ENCODE measurements at regions of chr17 and their contacts with region 1.

Region 1: GRCh38 chr17:58303971-58304725 is 23.4 kb upstream of the MPO start:
- DNase-seq: peak; percentile 70
- H3K4me3 Mint-ChIP-seq: no peak overlapping the region
- H3K27ac Mint-ChIP-seq: no peak overlapping the region
- H3K4me1 Mint-ChIP-seq: no peaks in the 10 kb centered on the region
- H3K27me3 Mint-ChIP-seq: no peaks in the 10 kb centered on the region

Region 2: DNA sequence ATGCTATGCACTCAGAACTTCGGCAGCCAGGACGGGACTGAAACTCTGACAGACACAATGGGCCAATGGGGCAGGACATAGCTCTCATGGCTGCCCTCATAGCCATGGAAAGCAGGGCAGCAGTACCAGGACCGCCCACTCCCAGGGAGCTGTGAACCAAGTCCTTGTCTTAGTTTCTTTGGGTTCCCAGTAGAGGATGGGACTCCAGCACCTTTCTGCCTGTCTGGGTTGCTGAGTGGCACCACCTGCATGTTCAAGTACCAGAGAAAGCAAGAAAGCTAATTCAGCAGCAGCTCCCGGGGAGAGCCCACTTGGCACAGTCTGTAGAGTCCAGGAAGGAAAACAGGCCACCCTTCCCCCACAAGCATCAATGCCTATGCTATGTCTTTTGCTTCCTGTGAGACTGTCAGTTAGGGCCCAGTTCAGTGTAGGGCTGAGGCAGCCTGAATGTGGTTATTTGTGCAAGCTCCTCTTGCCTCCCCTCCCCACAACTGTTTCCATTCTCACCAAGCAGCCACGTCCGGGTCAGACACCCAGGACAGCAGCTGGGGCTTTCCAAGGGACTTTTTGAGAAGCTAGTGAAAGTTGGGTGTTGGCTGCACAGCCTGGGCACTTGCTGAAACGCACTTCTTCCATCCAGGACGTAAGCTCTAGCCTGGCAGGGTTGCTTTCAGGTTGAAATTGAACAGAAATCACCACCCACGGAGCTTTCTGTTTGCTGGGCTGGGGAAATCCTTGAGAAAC is 40.1 kb after region 1 on chr17:
- CTCF ChIA-PET with region 1: interaction called, 11 read pairs
- intact Hi-C with region 1: loop called (anchors 1 kb)
- DNase-seq: peak; percentile 98
- H3K4me3 Mint-ChIP-seq: peak overlapping the region; percentile 92
- H3K27ac Mint-ChIP-seq: peak overlapping the region; percentile 99
- H3K4me1 Mint-ChIP-seq: peaks cover 60% of the 10 kb centered on the region
- H3K27me3 Mint-ChIP-seq: no peaks in the 10 kb centered on the region

Region 3: DNA sequence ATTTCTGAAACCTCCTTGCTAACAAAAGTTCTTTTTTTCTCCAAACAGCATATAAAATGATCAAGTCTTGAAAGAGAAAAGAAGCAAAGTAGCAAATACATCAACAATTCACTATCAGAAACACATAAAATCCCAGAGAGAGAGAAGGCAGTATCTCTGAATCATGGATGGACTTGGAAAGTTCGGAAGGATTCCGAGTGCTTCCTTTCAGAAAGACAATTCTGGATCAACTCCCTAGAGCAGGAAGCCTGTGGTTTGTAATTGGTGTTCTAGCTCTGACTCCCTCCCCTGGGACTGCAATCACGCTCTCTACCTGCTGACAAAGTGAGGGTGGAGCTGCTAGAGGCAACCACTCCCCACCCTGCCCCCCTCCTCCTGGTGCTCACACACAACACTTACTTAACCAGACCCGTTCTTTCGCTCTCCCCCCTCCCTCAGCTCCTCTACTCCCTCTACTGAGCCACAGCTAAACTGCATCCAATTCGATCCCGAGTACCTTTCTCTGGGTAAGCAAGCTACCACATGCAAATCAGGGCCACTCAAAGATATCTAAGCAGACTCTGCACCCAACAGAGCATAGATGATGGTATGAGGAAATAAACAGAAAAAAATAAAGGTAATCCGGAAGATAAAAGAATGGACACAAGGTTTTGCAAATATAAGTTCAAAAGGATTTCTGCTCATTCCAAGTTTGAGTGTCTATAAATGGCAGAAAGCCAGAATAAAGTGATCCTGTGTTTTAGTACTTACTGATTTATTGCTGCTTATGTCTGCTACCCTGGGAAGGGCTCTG is 113.3 kb after region 1 on chr17 and contains the start of gene RNF43:
- CTCF ChIA-PET with region 1: interaction called, 22 read pairs
- intact Hi-C with region 1: no loop called
- DNase-seq: peak; percentile 95
- H3K4me3 Mint-ChIP-seq: peak within 1 kb of the TSS; percentile 41
- H3K27ac Mint-ChIP-seq: peak within 1 kb of the TSS; percentile 18
- H3K4me1 Mint-ChIP-seq: peaks cover 18% of the 10 kb centered on the region
- H3K27me3 Mint-ChIP-seq: no peaks in the 10 kb centered on the region
- total RNA-seq, gene RNF43: 0.38 to 0.91 TPM

Region 4: GRCh38 chr17:58432806-58433572 is 128.8 kb after region 1 on chr17:
- CTCF ChIA-PET with region 1: interaction called, 10 read pairs
- intact Hi-C with region 1: no loop called
- DNase-seq: no peak
- H3K4me3 Mint-ChIP-seq: no peak overlapping the region
- H3K27ac Mint-ChIP-seq: no peak overlapping the region
- H3K4me1 Mint-ChIP-seq: no peaks in the 10 kb centered on the region
- H3K27me3 Mint-ChIP-seq: no peaks in the 10 kb centered on the region